CD8-positive, alpha-beta T cell (primary cell): ENCODE measurements at regions of chr1 and their contacts with region 1.

Region 1: GRCh38 chr1:64675718-64676345 is 69.0 kb upstream of the RAVER2 start:
- DNase-seq: peak in 2 of 9 experiments; percentile 13 to 32
- ATAC-seq: no peak
- H3K4me3 ChIP-seq: no peak overlapping the region
- H3K4me3 Mint-ChIP-seq: no peak overlapping the region
- H3K27ac ChIP-seq: no peak overlapping the region
- H3K27ac Mint-ChIP-seq: no peak overlapping the region
- H3K4me1 ChIP-seq: no peaks in the 10 kb centered on the region
- H3K4me1 Mint-ChIP-seq: no peaks in the 10 kb centered on the region
- H3K27me3 ChIP-seq: no peaks in the 10 kb centered on the region
- H3K27me3 Mint-ChIP-seq: no peaks in the 10 kb centered on the region
- CTCF ChIP-seq: peak; percentile 75

Region 2: DNA sequence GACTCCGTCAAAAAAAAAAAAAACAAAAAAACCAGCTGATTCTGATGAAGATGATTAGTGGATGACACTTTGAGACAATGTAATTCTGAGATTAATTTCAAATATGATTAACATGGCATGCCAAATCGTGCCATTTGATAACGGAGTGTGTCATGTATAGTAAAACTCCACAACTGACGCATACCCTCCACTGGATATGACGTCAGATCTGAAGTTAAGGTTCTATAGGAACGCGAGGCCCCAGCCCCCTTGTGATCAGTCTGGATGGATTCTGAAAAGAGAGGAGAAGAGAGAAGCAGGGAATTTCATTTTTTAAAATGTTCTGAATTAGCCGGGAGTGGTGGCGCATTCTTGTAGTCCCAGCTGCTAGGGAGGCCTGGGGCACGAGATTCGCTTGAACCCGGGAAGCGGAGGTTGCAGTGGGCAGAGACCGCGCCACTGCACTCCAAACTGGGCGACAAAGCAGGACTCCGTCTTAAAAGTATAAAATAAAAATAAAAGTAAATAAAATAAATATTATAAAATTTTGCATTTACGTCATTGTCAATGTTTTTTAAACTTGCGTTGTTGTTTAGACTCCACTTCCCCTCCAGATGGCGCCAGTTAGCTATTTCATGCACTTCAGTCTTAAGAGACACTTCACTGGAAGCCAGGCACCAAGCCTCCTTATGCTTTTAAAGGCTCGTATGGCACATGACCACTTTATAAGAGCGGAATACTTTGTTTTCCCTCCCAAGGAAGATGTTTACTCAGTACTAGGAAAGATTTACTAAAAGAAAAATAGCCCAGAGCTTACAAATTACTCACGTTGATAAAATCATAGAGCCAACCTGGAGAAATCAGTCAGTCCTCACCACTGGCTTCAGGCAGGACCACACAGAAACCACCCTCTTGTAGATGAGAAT is 406.9 kb before region 1 on chr1:
- CTCF ChIA-PET with region 1: interaction called, 18 read pairs
- POLR2A ChIA-PET with region 1: no interaction called
- intact Hi-C with region 1: loop called in 1 of 2 experiments (anchors 1 kb)
- DNase-seq: peak; percentile 5 to 77 (median 60)
- ATAC-seq: peak; percentile 52
- H3K4me3 ChIP-seq: no peak overlapping the region
- H3K4me3 Mint-ChIP-seq: no peak overlapping the region
- H3K27ac ChIP-seq: no peak overlapping the region
- H3K27ac Mint-ChIP-seq: no peak overlapping the region
- H3K4me1 ChIP-seq: no peaks in the 10 kb centered on the region
- H3K4me1 Mint-ChIP-seq: no peaks in the 10 kb centered on the region
- H3K27me3 ChIP-seq: peaks cover 0 to 4% of the 10 kb centered on the region in 2 experiments
- H3K27me3 Mint-ChIP-seq: peaks cover 13% of the 10 kb centered on the region
- CTCF ChIP-seq: peak; percentile 68

Region 3: DNA sequence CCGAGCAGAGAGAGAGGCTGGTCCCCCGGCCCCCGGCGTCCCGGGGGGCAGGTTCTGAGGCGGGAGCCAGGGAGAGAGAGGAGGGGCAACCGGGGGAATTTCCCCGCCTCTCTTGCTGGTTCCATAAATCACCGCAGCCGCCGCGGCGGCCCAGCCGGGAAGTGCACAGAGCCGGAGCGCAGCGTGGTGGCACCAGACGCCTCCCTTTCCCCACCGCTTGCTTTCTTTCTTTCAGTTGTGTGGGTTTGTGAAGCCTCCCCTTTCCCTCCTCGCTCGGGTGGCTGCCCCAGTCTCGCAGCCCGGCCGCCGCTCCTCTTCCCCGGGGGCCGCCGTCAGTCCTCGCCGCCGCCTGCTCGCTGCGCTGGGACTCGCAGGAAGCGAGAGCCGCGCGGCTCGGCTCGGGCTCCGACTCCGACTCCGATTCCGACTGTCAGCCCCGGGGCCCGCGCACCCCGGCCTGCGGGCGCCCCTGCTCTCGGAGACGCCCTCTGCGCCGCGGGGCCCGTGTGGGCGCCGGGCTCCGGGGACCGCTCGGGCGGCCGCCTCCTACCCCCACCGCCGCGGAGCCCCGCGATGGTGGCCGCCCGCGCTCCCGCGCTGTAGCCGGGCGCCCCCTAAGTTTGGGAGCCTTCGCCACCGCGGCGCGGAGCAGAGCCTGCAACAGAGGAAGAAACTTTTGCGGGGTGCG is 205.7 kb before region 1 on chr1 and contains the start of gene CACHD1:
- CTCF ChIA-PET with region 1: interaction called, 5 read pairs
- POLR2A ChIA-PET with region 1: interaction called, 3 read pairs
- intact Hi-C with region 1: loop called (anchors 1 kb)
- DNase-seq: peak; percentile 7 to 86 (median 70)
- ATAC-seq: peak; percentile 85
- H3K4me3 ChIP-seq: peak within 1 kb of the TSS; percentile 48 to 65
- H3K4me3 Mint-ChIP-seq: peak within 1 kb of the TSS; percentile 91
- H3K27ac ChIP-seq: no peak within 1 kb of the TSS
- H3K27ac Mint-ChIP-seq: no peak within 1 kb of the TSS
- H3K4me1 ChIP-seq: peaks cover 10% of the 10 kb centered on the region
- H3K4me1 Mint-ChIP-seq: peaks cover 23% of the 10 kb centered on the region
- H3K27me3 ChIP-seq: peaks cover 0 to 3% of the 10 kb centered on the region in 2 experiments
- H3K27me3 Mint-ChIP-seq: peaks cover 31% of the 10 kb centered on the region
- CTCF ChIP-seq: no peak
- total RNA-seq, gene CACHD1: 3.4 TPM

Region 4: GRCh38 chr1:64663668-64664067 is 12.2 kb before region 1 on chr1:
- CTCF ChIA-PET with region 1: interaction called, 38 read pairs
- POLR2A ChIA-PET with region 1: interaction called, 3 read pairs
- intact Hi-C with region 1: no loop called
- DNase-seq: peak in 2 of 9 experiments; percentile 7 to 16
- ATAC-seq: no peak
- H3K4me3 ChIP-seq: no peak overlapping the region
- H3K4me3 Mint-ChIP-seq: no peak overlapping the region
- H3K27ac ChIP-seq: no peak overlapping the region
- H3K27ac Mint-ChIP-seq: no peak overlapping the region
- H3K4me1 ChIP-seq: no peaks in the 10 kb centered on the region
- H3K4me1 Mint-ChIP-seq: no peaks in the 10 kb centered on the region
- H3K27me3 ChIP-seq: no peaks in the 10 kb centered on the region
- H3K27me3 Mint-ChIP-seq: no peaks in the 10 kb centered on the region
- CTCF ChIP-seq: no peak